Sciatic nerve (tissue), 2 donors: ENCODE measurements at regions of chr5 and their contacts with region 1.

Region 1: DNA sequence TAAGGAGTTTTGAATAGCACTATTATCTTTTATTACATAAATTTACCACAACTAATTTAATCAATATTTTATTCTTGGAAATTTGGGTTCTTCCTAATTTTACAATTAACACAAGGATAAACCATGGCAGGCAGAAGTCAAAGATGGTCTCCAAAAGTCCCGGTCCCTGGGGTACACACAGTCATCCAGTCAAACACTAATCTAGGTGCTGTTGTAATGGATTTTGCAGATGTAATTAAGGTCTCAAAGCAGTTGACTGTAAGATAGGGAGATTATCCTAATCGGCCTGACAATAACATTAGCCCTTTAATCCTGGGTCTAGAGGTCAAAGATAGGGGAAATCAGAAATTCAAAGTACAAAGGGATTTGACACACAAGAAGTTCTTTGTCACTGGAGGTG is 57.5 kb upstream of the HTR1A start:
- DNase-seq: no peak
- ATAC-seq: no peak

Region 2: DNA sequence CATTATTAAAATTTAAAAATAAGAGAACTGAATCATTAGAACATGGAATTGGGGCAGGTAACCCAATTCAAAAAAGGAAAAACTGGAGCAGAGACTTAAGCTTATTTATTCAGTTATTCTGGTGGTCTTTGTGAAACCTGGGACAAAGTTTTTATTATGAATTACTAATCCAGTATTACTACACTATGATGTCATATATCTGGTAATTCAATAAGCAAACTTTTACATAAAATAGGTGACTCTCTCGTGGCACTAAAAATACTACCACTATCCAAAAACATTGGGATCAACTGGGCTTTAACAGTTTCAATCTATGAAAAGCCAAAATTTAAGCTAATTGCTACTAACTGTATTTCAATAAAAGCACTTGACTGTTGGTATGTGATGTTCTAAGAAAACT is 351.0 kb after region 1 on chr5:
- intact Hi-C with region 1: loop called (anchors 5 kb)
- DNase-seq: no peak
- ATAC-seq: no peak